ENCODE measurements at regions of chr18 and their contacts with region 1.

Region 1: GRCh38 chr18:34729264-34729663 is 19.2 kb downstream of the DTNA start:
- DNase-seq: no peak
- ATAC-seq: peak; percentile 78 to 94 (median 88)
- H3K4me3 ChIP-seq: no peak overlapping the region
- H3K27ac ChIP-seq: no peak overlapping the region
- H3K4me1 ChIP-seq: peaks cover 19% of the 10 kb centered on the region
- H3K27me3 ChIP-seq: no peaks in the 10 kb centered on the region
- CTCF ChIP-seq: peak; percentile 51

Region 2: DNA sequence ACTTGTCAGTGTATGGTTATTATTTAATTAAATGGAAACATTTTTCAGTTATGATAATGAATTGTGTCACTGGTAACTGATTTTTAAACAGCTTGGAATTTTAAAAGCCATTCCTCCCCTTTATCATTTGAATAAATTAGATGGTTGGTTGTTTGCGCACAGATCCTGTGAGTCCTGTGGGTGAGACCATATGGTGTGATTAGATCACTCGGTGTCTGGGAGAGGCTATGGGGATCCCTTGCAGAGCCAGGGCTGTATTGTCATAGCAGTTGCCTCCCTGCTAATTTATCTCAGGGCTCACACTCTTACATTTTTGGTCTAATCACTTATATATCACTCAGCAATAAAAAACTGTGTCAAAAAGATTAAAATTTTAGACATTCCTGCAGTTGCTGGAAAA is 1017.8 kb before region 1 on chr18:
- intact Hi-C with region 1: no loop called
- DNase-seq: no peak
- ATAC-seq: no peak
- H3K4me3 ChIP-seq: no peak overlapping the region
- H3K27ac ChIP-seq: no peak overlapping the region
- H3K4me1 ChIP-seq: no peaks in the 10 kb centered on the region
- H3K27me3 ChIP-seq: no peaks in the 10 kb centered on the region
- CTCF ChIP-seq: no peak

Region 3: DNA sequence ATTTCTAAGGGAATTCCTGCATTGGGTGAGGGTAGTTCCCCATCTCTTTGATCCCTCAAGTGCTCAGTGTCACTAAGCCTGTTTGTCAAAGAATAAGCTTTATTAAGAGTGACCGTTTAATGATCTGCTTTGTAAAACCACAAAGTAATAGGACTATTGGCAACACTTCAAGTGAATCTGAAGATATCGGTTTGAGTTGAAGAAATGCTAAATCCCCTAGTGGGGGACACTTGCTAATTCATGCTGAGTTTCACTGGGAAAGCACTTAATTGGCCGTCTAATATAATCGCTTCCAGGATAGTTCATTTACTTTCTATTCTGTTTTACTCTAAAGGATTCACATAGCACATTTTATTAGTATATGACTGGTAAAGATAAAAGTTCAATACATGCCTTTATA is 35.2 kb after region 1 on chr18:
- intact Hi-C with region 1: loop called in 1 of 2 experiments (anchors 5 kb)
- DNase-seq: no peak
- ATAC-seq: no peak
- H3K4me3 ChIP-seq: no peak overlapping the region
- H3K27ac ChIP-seq: no peak overlapping the region
- H3K4me1 ChIP-seq: peaks cover 13% of the 10 kb centered on the region
- H3K27me3 ChIP-seq: no peaks in the 10 kb centered on the region
- CTCF ChIP-seq: no peak

Measured in psoas muscle (tissue), 8 donors.